A549 (cell line): ENCODE measurements at regions of chr2 and their contacts with region 1.

Region 1: GRCh38 chr2:238305092-238305862 is 15.0 kb upstream of the TRAF3IP1 start:
- DNase-seq: peak in 1 of 2 experiments; percentile 61
- ATAC-seq: peak; percentile 70 to 81
- H3K4me3 ChIP-seq: no peak overlapping the region
- H3K27ac ChIP-seq: no peak overlapping the region
- H3K4me1 ChIP-seq: peaks cover 26% of the 10 kb centered on the region
- CTCF ChIP-seq: peak; percentile 37
- EP300 ChIP-seq: no peak
- POLR2A ChIP-seq: no peak
- RAD21 ChIP-seq: peak; percentile 21 to 31; a peak in 2 of 5 replicates

Region 2: GRCh38 chr2:238288650-238289573 is 16.4 kb before region 1 on chr2:
- CTCF ChIA-PET with region 1: interaction called, 29 read pairs
- POLR2A ChIA-PET with region 1: interaction called, 3 read pairs
- DNase-seq: peak; percentile 76 to 99
- ATAC-seq: peak; percentile 58 to 62
- H3K4me3 ChIP-seq: peak overlapping the region; percentile 67
- H3K27ac ChIP-seq: peak overlapping the region; percentile 90 to 95
- H3K4me1 ChIP-seq: peaks cover 69% of the 10 kb centered on the region
- CTCF ChIP-seq: peak; percentile 37; the same call in 2 of the 3 replicates
- EP300 ChIP-seq: no peak
- POLR2A ChIP-seq: peak; percentile 58; the same call in 1 of the 2 replicates
- RAD21 ChIP-seq: no peak; a peak in 1 of 5 replicates

Region 3: GRCh38 chr2:238493880-238494572 is 188.7 kb after region 1 on chr2:
- CTCF ChIA-PET with region 1: no interaction called
- POLR2A ChIA-PET with region 1: no interaction called
- DNase-seq: no peak
- ATAC-seq: no peak
- H3K4me3 ChIP-seq: no peak overlapping the region
- H3K27ac ChIP-seq: no peak overlapping the region
- H3K4me1 ChIP-seq: no peaks in the 10 kb centered on the region
- CTCF ChIP-seq: no peak
- EP300 ChIP-seq: no peak
- POLR2A ChIP-seq: no peak
- RAD21 ChIP-seq: no peak